Endothelial cell of umbilical vein (primary cell): ENCODE measurements at regions of chr9 and their contacts with region 1.

Region 1: DNA sequence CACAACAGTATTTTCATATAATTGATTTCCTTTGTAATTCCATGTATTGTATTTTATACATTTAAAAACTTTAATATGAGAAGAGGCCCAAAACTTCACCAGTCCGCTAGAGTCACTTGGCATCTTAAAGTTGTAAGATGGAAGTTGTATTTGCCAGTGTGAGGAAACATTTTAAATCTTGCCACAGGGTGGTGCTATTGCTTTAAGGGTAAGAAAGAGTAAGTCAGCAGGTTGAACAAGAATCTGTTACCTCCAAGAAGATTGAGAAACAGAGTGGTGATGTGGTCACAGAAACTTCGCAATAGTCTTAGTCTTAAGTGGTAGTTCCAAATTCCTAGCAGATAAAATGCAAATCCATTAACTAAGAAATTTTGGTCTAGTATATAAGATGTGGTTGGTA is 39.8 kb upstream of the RANBP6 start:
- DNase-seq: peak; percentile 91
- H3K4me3 ChIP-seq: no peak overlapping the region
- H3K27ac ChIP-seq: no peak overlapping the region
- H3K4me1 ChIP-seq: no peaks in the 10 kb centered on the region
- H3K27me3 ChIP-seq: no peaks in the 10 kb centered on the region
- CTCF ChIP-seq: peak; percentile 37
- POLR2A ChIP-seq: no peak

Region 2: GRCh38 chr9:5628530-5629311 is 426.5 kb before region 1 on chr9 and contains the start of gene RIC1:
- CTCF ChIA-PET with region 1: no interaction called
- POLR2A ChIA-PET with region 1: no interaction called
- dilution Hi-C with region 1: no loop called
- intact Hi-C with region 1: no loop called
- DNase-seq: peak; percentile 94
- H3K4me3 ChIP-seq: peak within 1 kb of the TSS; percentile 91 to 99 (median 93)
- H3K27ac ChIP-seq: peak within 1 kb of the TSS; percentile 85
- H3K4me1 ChIP-seq: peaks cover 32% of the 10 kb centered on the region
- H3K27me3 ChIP-seq: no peaks in the 10 kb centered on the region
- CTCF ChIP-seq: no peak
- POLR2A ChIP-seq: peak; percentile 98
- total RNA-seq, gene RIC1: 23.5 and 24.8 TPM in 2 replicates

Region 3: GRCh38 chr9:5793812-5794211 is 261.4 kb before region 1 on chr9:
- CTCF ChIA-PET with region 1: interaction called, 110 read pairs
- POLR2A ChIA-PET with region 1: no interaction called
- dilution Hi-C with region 1: no loop called
- intact Hi-C with region 1: loop called (anchors 1 kb)
- DNase-seq: no peak
- H3K4me3 ChIP-seq: no peak overlapping the region
- H3K27ac ChIP-seq: no peak overlapping the region
- H3K4me1 ChIP-seq: no peaks in the 10 kb centered on the region
- H3K27me3 ChIP-seq: no peaks in the 10 kb centered on the region
- CTCF ChIP-seq: no peak
- POLR2A ChIP-seq: no peak

Region 4: DNA sequence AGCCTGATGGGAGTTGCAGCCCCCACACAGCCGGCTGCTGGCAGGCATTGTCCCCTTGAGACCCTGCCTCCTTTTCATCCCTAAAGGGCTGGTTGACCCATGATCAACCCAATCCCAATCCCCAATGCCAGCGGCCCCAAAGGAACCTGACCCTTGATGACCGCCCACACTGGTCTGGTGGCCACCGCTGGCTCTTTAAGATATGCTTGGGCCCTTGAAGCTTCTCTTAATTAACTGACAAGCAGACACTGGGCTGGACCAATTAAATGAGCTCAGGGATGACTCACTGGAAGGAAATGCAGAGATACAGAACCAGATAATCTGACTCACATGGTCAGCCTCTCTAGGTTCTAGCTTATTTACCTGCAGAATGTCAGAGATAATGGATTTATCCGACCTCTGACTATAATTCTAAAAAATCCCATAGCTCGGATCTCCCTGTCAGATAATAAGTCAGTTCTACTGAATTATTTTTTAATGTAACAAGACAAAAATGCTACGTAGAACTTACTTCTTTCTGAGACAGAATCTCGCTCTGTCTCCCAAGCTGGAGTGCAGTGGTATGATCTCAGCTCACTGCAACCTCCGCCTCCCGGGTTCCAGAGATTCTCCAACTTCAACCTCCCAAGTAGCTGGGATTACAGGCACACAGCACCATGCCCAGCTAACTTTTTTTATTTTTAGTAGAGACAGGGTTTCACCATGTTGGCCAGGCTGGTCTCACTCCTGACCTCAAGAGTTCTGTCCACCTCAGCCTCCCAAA is 175.6 kb before region 1 on chr9:
- CTCF ChIA-PET with region 1: interaction called, 192 read pairs
- POLR2A ChIA-PET with region 1: no interaction called
- dilution Hi-C with region 1: no loop called
- intact Hi-C with region 1: no loop called
- DNase-seq: peak; percentile 37
- H3K4me3 ChIP-seq: no peak overlapping the region
- H3K27ac ChIP-seq: no peak overlapping the region
- H3K4me1 ChIP-seq: peaks cover 4% of the 10 kb centered on the region
- H3K27me3 ChIP-seq: no peaks in the 10 kb centered on the region
- CTCF ChIP-seq: no peak
- POLR2A ChIP-seq: no peak

Region 5: GRCh38 chr9:6024020-6024554 is 31.1 kb before region 1 on chr9:
- CTCF ChIA-PET with region 1: interaction called, 19 read pairs
- POLR2A ChIA-PET with region 1: no interaction called
- dilution Hi-C with region 1: no loop called
- intact Hi-C with region 1: no loop called
- DNase-seq: peak; percentile 22
- H3K4me3 ChIP-seq: peak overlapping the region in 1 of 3 experiments; percentile 11
- H3K27ac ChIP-seq: no peak overlapping the region
- H3K4me1 ChIP-seq: no peaks in the 10 kb centered on the region
- H3K27me3 ChIP-seq: peaks cover 1 to 13% of the 10 kb centered on the region in 2 experiments
- CTCF ChIP-seq: peak; percentile 46 to 48
- POLR2A ChIP-seq: no peak

Region 6: DNA sequence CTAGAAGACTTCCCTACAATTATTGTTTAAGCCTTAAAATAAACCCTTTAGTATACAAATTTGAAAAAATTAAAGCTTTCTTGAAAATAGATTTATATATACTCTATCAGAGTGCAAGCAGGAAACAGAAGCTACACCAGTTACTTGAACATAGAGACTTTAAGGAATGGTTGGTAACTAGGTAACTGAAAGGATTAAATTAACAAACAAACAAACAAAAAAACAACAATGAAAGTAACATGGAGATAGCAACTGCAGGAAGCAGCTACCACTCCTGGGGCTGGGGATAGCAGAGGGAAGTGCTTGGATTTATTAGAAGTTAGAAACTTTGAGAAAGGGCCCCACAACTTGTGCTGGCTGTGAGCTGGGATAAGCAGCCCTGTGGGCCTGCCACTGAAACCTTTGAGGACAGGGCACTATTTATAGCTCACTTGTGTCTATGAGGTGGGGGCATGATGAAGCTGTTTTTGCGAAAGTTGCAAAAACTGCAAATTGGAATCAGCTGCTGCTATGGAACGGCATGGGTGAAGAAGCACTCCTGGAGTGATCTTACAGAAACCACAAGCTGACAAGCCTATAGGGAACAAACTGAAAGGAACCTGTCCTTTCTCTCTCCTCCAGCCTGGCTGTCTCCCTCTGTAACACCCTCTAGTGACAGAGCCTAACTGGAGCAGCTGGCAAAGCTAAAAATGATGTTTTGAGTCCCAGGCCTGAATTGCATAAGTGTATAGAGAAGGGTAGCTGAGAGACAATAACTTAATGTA is 51.5 kb after region 1 on chr9:
- CTCF ChIA-PET with region 1: interaction called, 32 read pairs
- POLR2A ChIA-PET with region 1: no interaction called
- dilution Hi-C with region 1: no loop called
- intact Hi-C with region 1: no loop called
- DNase-seq: peak; percentile 44
- H3K4me3 ChIP-seq: no peak overlapping the region
- H3K27ac ChIP-seq: no peak overlapping the region
- H3K4me1 ChIP-seq: peaks cover 9% of the 10 kb centered on the region
- H3K27me3 ChIP-seq: no peaks in the 10 kb centered on the region
- CTCF ChIP-seq: peak in 1 of 2 donors; percentile 32
- POLR2A ChIP-seq: no peak

Region 7: DNA sequence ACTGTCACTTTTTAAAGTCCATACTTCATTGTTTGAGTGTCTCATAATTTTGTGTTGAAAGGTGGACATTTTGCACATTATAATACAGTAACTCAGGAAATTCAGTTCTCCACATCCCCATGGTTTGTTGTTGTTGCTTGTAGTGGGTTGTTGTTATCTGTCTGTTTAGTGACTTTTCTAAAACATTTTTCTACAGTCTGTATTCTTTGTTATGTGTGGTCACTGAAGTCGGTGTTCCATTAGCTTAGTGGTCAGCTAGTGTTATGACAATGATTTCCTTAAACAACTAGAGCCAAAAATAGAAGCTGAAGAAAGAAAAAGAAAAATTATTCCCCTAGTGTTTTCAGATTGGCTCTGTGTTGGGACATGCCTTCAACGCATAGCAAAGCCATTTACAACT is 154.8 kb after region 1 on chr9:
- CTCF ChIA-PET with region 1: no interaction called
- POLR2A ChIA-PET with region 1: no interaction called
- dilution Hi-C with region 1: no loop called
- intact Hi-C with region 1: no loop called
- DNase-seq: no peak
- H3K4me3 ChIP-seq: no peak overlapping the region
- H3K27ac ChIP-seq: no peak overlapping the region
- H3K4me1 ChIP-seq: no peaks in the 10 kb centered on the region
- H3K27me3 ChIP-seq: no peaks in the 10 kb centered on the region
- CTCF ChIP-seq: no peak
- POLR2A ChIP-seq: no peak

Region 8: GRCh38 chr9:6305954-6306563 is 250.8 kb after region 1 on chr9:
- CTCF ChIA-PET with region 1: interaction called, 417 read pairs
- POLR2A ChIA-PET with region 1: interaction called, 5 read pairs
- dilution Hi-C with region 1: no loop called
- intact Hi-C with region 1: loop called (anchors 1 kb)
- DNase-seq: peak; percentile 72
- H3K4me3 ChIP-seq: no peak overlapping the region
- H3K27ac ChIP-seq: no peak overlapping the region
- H3K4me1 ChIP-seq: no peaks in the 10 kb centered on the region
- H3K27me3 ChIP-seq: peaks cover 4 to 5% of the 10 kb centered on the region in 2 experiments
- CTCF ChIP-seq: peak; percentile 22 to 34
- POLR2A ChIP-seq: no peak

Region 9: GRCh38 chr9:6552033-6552432 is 496.8 kb after region 1 on chr9:
- CTCF ChIA-PET with region 1: no interaction called
- POLR2A ChIA-PET with region 1: no interaction called
- dilution Hi-C with region 1: no loop called
- intact Hi-C with region 1: no loop called
- DNase-seq: peak; percentile 92
- H3K4me3 ChIP-seq: peak overlapping the region in 1 of 3 experiments; percentile 58
- H3K27ac ChIP-seq: peak overlapping the region; percentile 99
- H3K4me1 ChIP-seq: peaks cover 42% of the 10 kb centered on the region
- H3K27me3 ChIP-seq: no peaks in the 10 kb centered on the region
- CTCF ChIP-seq: peak in 1 of 2 donors; percentile 45
- POLR2A ChIP-seq: peak; percentile 19

Region 10: DNA sequence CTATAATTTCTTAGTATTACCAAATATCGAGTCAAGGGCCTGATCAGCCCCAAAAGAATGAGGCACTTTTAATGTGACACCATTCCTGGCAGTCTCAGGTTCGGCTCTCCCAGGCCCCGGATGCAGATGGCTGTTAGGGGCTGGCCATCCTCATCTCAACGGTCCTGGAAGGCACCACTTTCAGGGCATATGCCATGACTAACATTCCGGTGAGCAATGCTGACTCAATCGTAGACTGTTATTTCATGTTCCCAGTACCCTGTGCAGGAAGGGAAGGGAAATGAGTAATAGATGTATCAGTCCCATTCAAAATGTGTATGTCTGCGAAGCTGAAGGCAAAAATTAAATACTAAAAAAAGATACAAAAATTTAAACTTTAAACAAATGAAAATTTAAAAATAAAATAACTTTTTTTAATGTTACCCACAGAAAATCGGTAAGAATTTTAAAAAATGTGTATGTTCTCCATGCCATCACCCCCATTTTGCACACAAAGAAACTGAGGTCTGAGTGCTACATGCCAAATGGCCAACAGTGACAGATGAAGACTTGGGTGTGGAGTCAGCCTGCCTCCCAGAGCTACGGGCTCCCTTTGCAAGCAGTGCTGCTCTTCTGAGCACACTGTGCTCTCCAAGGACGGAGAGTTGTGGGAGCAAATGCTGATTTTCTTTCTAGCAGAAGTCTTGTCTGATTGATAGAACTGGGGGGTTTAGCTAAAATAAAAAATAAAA is 511.4 kb after region 1 on chr9:
- CTCF ChIA-PET with region 1: interaction called, 22 read pairs
- POLR2A ChIA-PET with region 1: no interaction called
- dilution Hi-C with region 1: no loop called
- intact Hi-C with region 1: loop called (anchors 1 kb)
- DNase-seq: peak; percentile 98
- H3K4me3 ChIP-seq: peak overlapping the region in 1 of 3 experiments; percentile 12
- H3K27ac ChIP-seq: peak overlapping the region; percentile 99
- H3K4me1 ChIP-seq: peaks cover 58% of the 10 kb centered on the region
- H3K27me3 ChIP-seq: no peaks in the 10 kb centered on the region
- CTCF ChIP-seq: peak in 1 of 2 donors; percentile 12
- POLR2A ChIP-seq: peak; percentile 82